ENCODE measurements at regions of chr22 and their contacts with region 1.

Region 1: DNA sequence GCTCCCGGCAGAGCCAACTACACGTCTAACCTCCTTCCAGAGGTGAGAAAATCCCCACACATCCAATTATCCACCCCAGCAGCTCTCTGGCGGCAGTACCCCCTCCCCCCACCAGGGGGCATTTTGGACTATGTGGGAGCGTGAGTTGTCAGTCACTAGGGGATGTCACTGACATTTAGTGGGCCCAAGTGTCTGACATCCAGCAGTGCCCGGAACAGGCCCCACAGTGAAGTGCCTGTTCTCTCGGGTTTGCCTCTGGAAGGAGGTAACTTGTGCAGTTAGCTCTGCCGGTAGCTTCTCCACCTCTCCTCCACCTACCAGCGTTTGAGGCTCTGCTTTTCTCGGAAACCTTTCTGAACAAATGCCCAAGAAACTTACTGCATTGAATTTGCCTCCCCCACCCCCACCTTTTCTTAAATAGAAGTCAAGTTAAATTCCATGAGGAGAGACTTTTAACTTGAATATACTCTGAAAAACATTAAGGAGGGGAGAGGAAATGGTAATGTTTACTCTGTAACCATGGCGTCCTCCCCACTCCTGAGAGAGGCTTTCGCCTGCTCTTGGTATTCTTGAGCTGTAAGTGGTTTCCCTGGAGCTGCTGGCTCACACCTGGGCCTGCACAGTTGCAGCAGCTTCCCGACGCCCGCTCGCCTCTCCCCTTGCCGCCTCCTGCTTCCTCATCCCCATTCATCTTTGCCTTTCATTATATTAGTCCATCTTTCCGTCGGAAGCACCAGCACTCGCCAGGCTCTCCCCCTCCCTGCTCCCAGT is 112.8 kb downstream of the WNT7B start:
- DNase-seq: no peak
- H3K4me3 ChIP-seq: no peak overlapping the region
- CTCF ChIP-seq: peak; percentile 88

Region 2: GRCh38 chr22:45577746-45578523 is 286.2 kb before region 1 on chr22:
- CTCF ChIA-PET with region 1: interaction called, 26 read pairs
- POLR2A ChIA-PET with region 1: no interaction called
- DNase-seq: no peak
- H3K4me3 ChIP-seq: no peak overlapping the region
- CTCF ChIP-seq: peak; percentile 95

Region 3: GRCh38 chr22:45645526-45646414 is 218.4 kb before region 1 on chr22:
- CTCF ChIA-PET with region 1: interaction called, 44 read pairs
- POLR2A ChIA-PET with region 1: no interaction called
- DNase-seq: no peak
- H3K4me3 ChIP-seq: peak overlapping the region; percentile 43
- CTCF ChIP-seq: peak; percentile 89

Region 4: GRCh38 chr22:45831394-45831793 is 32.8 kb before region 1 on chr22:
- CTCF ChIA-PET with region 1: interaction called, 10 read pairs
- POLR2A ChIA-PET with region 1: no interaction called
- DNase-seq: no peak
- H3K4me3 ChIP-seq: no peak overlapping the region
- CTCF ChIP-seq: peak; percentile 43

Region 5: DNA sequence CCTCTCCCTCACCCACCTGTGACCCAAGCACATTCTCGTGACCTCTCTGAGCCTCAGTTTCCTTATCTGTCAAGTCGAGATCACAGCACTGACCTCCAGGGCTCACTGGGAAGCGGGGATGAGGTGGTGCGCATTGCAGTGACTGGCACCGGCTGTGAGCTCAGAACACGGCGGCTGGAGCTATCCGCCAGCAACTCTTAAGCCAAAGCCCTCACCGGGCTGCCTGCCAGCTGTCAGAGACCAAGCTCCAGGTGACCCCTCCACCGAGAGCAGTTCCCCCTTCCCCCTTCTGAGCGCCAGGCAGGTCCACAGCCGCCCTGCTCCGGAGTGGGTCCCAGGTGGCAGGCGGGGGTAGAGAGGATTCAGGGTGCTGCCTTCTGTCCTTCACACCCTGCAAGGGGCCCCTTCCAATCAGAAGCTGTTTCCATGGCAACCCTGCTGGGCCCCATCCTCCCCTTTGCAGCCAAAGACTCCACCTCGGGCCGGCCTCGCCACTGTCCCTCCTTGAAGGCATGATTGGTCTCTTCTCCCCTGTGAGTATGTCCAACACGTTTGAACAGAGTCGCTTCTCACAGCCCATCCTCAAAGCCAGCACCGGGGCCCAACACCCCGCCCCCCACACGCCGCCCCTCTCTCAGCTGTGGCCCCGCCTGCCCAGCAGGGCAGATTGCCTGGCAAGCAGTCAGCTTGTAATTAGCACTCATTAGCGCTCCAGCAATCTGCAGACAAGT is 14.1 kb after region 1 on chr22:
- CTCF ChIA-PET with region 1: interaction called, 55 read pairs
- POLR2A ChIA-PET with region 1: no interaction called
- DNase-seq: no peak
- H3K4me3 ChIP-seq: no peak overlapping the region
- CTCF ChIP-seq: no peak

Region 6: GRCh38 chr22:45932071-45932470 is 67.9 kb after region 1 on chr22:
- CTCF ChIA-PET with region 1: interaction called, 11 read pairs
- POLR2A ChIA-PET with region 1: no interaction called
- DNase-seq: no peak
- H3K4me3 ChIP-seq: no peak overlapping the region
- CTCF ChIP-seq: no peak

Region 7: DNA sequence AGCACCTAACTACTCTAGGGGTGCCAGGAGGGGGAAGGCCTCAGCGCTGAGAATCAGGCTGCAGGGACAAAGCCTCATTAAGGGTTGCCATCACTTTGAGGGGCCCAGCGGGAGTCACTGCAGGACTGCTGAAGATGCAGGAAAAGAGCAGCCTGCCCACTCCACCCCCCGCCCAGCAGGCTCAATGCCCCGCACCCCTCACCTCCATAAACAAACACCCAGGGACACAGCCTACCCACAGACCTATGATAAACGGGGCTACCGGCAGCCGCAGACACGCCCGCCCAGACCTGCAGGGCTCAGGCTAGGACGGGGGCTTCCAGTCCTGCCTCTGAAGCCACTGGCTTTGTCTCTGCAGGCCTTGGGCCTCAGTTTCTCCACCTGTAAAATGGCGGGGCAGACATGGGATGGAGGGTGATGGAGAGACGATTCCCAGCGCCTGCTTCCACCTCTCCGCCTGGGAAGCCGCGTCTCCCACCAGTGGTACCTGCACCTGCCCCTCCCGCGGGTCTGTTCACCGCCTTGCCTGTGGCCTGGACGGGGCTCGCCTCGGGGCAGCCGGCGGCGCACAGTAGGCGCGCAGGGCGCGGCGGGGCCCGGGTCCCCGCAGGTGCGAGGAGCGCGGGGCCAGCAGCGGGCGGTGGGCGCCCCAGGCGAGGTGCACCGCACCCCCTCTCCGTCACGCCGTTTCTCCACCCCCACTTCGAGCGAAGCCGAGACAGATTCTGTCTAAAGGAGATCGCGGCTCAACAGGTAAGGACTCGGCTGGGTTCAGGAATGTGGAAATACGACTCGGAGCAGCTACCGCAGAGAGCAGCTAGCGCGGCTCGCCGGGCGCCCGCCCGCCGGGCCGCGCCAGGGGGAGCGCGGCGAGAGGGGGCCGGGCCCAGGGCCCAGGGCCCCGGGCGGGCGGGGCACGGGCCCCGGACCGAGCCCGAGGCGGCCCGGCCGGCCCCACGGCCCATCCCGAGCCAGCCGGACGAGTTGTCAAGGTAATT is 111.3 kb after region 1 on chr22:
- CTCF ChIA-PET with region 1: interaction called, 33 read pairs
- POLR2A ChIA-PET with region 1: no interaction called
- DNase-seq: no peak
- H3K4me3 ChIP-seq: no peak overlapping the region
- CTCF ChIP-seq: no peak

Region 8: DNA sequence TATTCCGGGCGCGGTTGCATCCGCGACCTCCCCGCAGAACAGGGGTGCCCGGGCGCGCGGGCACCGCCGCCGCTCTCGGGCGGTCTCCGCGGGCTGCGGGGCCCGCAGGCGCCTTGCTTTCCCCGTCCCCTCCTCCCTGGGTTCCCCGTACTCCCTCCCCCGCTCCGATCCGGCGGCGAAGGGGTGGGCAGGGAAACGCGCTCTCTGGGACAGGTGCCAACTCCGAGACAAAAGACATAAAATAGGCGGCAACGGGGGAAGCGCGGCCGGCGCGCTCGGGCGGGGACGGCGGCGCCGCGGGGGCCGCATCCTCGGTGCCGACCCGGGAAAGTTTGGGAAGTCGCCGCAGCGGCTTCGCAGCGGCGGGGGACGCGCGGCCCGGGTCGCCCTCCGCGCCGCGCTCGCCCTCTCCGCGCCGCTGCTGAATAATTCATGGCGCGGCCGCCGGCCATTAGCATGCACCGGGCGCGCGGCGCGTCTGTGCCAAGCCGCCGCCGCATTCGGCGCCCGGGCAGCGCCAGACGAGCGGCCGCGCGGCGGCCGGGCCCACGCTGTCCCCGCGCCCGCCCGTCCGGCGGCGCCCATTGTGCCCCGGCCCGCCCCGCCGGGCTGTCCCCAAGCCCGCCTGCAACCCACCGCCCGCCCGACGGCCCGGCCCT is 207.4 kb after region 1 on chr22:
- CTCF ChIA-PET with region 1: no interaction called
- POLR2A ChIA-PET with region 1: no interaction called
- DNase-seq: peak; percentile 53
- H3K4me3 ChIP-seq: peak overlapping the region; percentile 77
- CTCF ChIP-seq: no peak

Region 9: DNA sequence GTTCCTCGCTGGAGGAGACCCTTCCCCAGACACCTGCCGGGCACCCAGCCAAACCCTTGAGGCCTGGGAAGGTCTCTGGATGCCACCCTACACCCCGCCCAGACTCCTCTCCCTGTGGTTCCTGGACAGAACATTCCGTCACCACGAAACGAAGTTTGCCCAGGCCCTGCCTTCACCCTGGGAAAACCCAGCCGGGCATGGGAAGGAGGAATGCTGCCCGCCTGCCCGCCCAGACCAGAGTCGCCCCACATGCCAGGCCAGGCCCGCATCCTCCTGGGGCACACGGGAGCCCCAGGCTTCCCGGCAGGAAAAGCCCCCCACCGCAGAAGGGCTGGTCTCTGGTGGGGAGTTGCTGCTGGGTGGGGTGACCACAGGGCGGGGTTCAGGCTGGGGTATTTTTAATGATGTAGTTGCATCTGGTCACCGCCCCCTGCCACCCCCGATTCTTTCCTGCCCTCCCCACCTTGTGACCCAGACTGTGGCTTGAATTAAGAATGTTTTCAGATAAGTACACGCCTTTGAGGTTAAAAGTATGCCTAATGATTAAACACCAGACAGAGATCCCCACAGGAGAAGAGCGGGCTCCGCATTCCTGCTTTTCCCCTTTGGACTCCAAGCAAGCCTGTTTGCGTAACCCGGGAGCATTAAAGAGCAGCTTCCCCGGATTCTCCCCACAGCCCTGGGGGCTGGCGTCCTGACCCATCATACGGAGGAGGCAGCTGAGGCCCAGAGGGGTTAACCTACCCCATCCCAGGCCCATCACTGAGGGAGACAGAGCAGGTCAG is 241.5 kb after region 1 on chr22:
- CTCF ChIA-PET with region 1: no interaction called
- POLR2A ChIA-PET with region 1: no interaction called
- DNase-seq: peak; percentile 51
- H3K4me3 ChIP-seq: no peak overlapping the region
- CTCF ChIP-seq: no peak

Measured in AG04449 (cell line).